ENCODE measurements at regions of chr4 and their contacts with region 1.

Region 1: DNA sequence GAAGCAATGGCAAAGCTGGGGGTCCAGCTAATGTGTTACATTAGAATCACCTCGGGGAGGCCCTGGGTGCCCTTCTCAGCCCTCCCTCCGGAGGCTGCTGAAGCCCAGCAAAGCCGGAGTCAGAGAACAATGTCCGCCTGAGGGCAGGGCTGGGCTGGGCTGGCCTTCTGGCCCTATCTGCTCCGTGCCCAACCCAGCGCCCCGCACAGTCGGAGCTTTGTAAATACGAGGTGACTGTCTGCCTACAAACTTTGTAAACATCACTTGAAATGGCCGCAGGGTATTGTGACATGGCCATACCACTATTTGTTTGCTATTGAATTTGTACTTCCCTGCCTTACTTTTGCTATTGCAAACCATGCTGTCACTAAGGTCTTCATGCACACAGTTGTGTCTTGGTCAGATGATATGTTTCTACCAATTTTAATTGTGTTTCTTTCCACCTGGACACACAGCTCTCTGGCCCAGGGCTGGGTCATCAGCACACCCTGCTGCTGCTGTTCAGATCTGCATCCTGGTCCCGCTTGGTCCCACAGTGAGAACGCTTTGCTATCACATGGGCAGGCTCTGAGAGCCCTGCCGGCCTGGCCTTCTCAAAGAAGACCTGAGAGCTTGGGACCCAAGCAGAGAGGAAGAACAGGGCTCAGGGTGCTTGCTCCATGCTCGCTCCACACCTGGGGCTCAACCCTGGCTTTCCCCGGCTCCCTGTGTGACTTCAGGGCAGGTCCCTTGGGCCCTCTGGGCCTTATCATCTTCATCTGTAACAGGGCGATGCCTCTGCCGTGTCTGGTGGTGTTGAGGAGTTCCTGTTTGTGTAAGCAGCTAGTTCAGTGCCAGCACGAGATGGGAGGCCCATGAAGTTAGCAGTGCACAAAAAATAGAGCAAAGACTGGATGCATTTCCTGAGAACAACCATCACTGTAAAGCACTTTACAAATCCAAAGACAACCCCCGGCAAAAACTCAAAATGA is 2.3 kb downstream of the S100P start:
- DNase-seq: peak; percentile 77
- H3K4me3 Mint-ChIP-seq: peak overlapping the region; percentile 47
- H3K27ac Mint-ChIP-seq: peak overlapping the region; percentile 95
- H3K4me1 Mint-ChIP-seq: peaks cover 37% of the 10 kb centered on the region
- H3K27me3 Mint-ChIP-seq: no peaks in the 10 kb centered on the region
- CTCF ChIP-seq: peak; percentile 20

Region 2: GRCh38 chr4:6591313-6591712 is 104.6 kb before region 1 on chr4:
- CTCF ChIA-PET with region 1: no interaction called
- POLR2A ChIA-PET with region 1: no interaction called
- intact Hi-C with region 1: no loop called
- DNase-seq: no peak
- H3K4me3 Mint-ChIP-seq: no peak overlapping the region
- H3K27ac Mint-ChIP-seq: no peak overlapping the region
- H3K4me1 Mint-ChIP-seq: no peaks in the 10 kb centered on the region
- H3K27me3 Mint-ChIP-seq: no peaks in the 10 kb centered on the region
- CTCF ChIP-seq: no peak

Region 3: GRCh38 chr4:6709230-6710114 is 13.5 kb after region 1 on chr4 and contains the start of gene MRFAP1L1:
- CTCF ChIA-PET with region 1: interaction called, 11 read pairs
- POLR2A ChIA-PET with region 1: interaction called, 65 read pairs
- intact Hi-C with region 1: no loop called
- DNase-seq: peak; percentile 96
- H3K4me3 Mint-ChIP-seq: peak within 1 kb of the TSS; percentile 98
- H3K27ac Mint-ChIP-seq: peak within 1 kb of the TSS; percentile 98
- H3K4me1 Mint-ChIP-seq: peaks cover 46% of the 10 kb centered on the region
- H3K27me3 Mint-ChIP-seq: no peaks in the 10 kb centered on the region
- CTCF ChIP-seq: peak; percentile 6
- total RNA-seq, gene MRFAP1L1: 42.5 and 63.2 TPM in 2 replicates

Region 4: GRCh38 chr4:6749341-6750171 is 53.6 kb after region 1 on chr4:
- CTCF ChIA-PET with region 1: no interaction called
- POLR2A ChIA-PET with region 1: no interaction called
- intact Hi-C with region 1: no loop called
- DNase-seq: peak; percentile 73
- H3K4me3 Mint-ChIP-seq: peak overlapping the region; percentile 41
- H3K27ac Mint-ChIP-seq: peak overlapping the region; percentile 60
- H3K4me1 Mint-ChIP-seq: peaks cover 23% of the 10 kb centered on the region
- H3K27me3 Mint-ChIP-seq: no peaks in the 10 kb centered on the region
- CTCF ChIP-seq: no peak

Region 5: DNA sequence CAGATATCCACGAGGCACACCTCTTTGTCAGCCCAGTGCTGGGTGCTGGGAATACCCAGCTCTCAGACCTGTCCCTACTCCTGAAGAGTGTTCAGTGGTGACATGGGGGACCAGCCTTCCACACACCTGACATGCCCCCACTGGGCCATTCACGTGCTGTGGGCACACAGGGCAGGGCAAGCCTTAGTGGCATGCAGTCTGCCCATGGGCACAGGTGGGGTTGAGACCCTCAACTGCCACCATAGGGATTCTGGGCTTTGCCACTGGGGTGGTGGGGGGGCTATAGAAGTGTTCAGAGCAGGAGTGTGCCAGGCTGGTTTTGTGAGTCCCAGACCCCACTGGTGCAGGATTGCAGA is 755.5 kb after region 1 on chr4:
- CTCF ChIA-PET with region 1: no interaction called
- POLR2A ChIA-PET with region 1: no interaction called
- intact Hi-C with region 1: no loop called
- DNase-seq: no peak
- H3K4me3 Mint-ChIP-seq: no peak overlapping the region
- H3K27ac Mint-ChIP-seq: no peak overlapping the region
- H3K4me1 Mint-ChIP-seq: no peaks in the 10 kb centered on the region
- H3K27me3 Mint-ChIP-seq: no peaks in the 10 kb centered on the region
- CTCF ChIP-seq: no peak